ENCODE measurements at regions of chr18 and their contacts with region 1.

Region 1: GRCh38 chr18:58043491-58044379 is at the start of gene NEDD4L:
- DNase-seq: peak; percentile 76 to 96
- H3K4me3 ChIP-seq: peak within 1 kb of the TSS; percentile 66
- CTCF ChIP-seq: no peak
- POLR2A ChIP-seq: no peak
- total RNA-seq, gene NEDD4L: 22.9 to 127 (median 35.0) TPM

Region 2: DNA sequence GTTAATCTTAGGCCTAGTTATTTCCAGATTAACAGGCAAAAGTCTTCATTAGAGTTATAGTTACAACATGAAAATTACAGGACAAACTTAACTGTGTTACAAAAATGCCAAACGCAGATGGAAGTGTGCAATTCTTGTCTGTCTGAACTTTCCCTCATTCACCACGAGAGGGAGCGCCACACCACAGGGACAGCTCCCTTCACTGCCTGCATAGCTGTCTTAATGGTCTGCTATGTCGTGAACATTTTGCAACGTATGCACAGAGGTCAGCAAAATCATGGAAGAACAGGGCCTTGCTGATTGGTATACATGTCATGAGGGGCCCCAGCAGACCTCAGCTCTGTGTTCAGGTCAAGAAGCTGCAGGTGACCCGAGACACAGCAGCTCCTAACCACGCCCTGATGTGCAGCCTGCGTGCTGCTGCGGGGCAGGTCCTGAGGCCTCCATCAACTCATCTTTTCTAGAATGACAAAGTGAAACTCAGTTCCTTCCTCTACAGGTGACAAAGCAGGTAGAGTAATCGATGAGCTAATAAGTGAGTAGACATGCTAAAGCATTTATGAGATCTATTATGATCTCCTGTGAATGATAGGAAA is 161.8 kb before region 1 on chr18:
- intact Hi-C with region 1: loop called (anchors 5 kb)
- DNase-seq: peak; percentile 39 to 89
- H3K4me3 ChIP-seq: no peak overlapping the region
- CTCF ChIP-seq: peak in 1 of 3 donors; percentile 54
- POLR2A ChIP-seq: no peak

Region 3: GRCh38 chr18:58124475-58124874 is 80.7 kb after region 1 on chr18:
- intact Hi-C with region 1: loop called (anchors 5 kb)
- DNase-seq: no peak
- H3K4me3 ChIP-seq: no peak overlapping the region
- CTCF ChIP-seq: no peak
- POLR2A ChIP-seq: no peak

Region 4: GRCh38 chr18:58321986-58322385 is 278.3 kb after region 1 on chr18:
- intact Hi-C with region 1: loop called (anchors 10 kb)
- DNase-seq: peak; percentile 86 to 92
- H3K4me3 ChIP-seq: no peak overlapping the region
- CTCF ChIP-seq: no peak
- POLR2A ChIP-seq: no peak

Region 5: DNA sequence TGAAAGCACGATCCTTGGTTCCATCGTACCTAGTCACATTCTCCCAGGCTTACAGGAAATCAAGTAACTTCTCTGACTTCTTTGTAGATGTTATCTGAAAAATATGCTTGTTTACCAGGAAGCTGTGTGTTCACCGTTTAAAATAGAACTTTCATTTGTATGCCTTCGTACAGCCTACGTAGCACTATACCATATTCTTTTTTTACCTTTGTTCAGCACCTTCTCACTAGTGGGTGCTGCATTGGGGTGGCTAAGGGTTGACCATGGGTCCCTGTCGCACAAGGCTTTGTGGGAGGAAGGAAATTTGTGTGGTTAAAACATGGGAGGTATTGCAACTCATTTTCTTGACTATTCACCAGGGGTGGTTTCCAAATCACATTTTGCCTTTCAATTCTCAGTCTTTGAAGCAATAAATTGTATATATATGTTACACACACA is 644.2 kb after region 1 on chr18:
- intact Hi-C with region 1: no loop called
- DNase-seq: no peak
- H3K4me3 ChIP-seq: no peak overlapping the region
- CTCF ChIP-seq: no peak
- POLR2A ChIP-seq: no peak

Region 6: GRCh38 chr18:59114160-59114559 is 1070.4 kb after region 1 on chr18:
- intact Hi-C with region 1: no loop called
- DNase-seq: no peak
- H3K4me3 ChIP-seq: no peak overlapping the region
- CTCF ChIP-seq: no peak
- POLR2A ChIP-seq: no peak

Measured in lower leg skin (tissue), 4 donors.